ENCODE measurements at regions of chr12 and their contacts with region 1.

Region 1: GRCh38 chr12:121626087-121626852 is at the start of gene ORAI1:
- DNase-seq: peak; percentile 97
- H3K4me3 ChIP-seq: peak within 1 kb of the TSS; percentile 53 to 66
- H3K27ac ChIP-seq: peak within 1 kb of the TSS; percentile 86 to 87
- H3K4me1 ChIP-seq: no peaks in the 10 kb centered on the region
- H3K27me3 ChIP-seq: no peaks in the 10 kb centered on the region
- CTCF ChIP-seq: peak in 2 of 4 experiments; percentile 21 to 51
- POLR2A ChIP-seq: peak; percentile 66
- total RNA-seq, gene ORAI1: 5.5 to 71.1 TPM

Region 2: DNA sequence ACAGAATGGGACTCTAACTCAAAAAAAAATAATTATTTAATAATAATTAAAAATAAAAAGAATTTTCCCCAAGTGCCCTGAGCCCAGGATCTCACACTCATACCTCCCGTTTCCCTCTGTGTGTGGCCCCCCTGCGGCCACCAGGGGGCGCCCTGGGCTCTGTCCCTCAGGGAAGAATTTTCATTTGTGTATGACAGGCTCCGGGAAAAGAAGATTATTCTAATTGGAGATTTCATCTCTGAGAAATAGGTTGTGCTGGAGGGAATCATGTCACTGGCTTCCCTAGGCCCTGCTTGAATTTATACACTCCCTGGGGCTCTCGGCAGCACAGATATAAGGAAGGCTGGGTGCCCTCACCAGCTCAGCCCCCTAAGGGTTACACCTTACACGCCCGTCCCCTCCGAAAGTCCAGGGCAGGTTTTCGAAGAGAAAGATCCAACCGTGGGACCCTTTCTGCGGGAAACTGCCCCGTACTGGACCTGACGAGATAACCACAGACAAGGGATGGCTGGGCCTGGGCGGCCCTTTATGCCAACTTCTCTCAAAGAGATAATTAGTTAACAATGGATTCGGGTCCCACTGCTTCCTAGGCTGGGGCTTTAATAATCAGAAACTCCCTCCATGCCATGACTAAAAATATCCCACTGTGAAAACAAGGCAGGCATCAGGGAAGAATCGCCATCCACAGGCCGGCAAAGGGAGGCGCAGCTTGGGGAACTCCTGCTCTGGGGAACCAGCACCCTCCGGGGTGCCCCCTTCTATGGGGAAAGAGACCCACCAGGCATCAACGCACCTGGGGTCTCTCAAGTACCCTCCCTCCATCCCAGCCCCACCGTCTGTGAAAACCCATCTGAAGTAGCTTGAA is 126.1 kb before region 1 on chr12:
- intact Hi-C with region 1: loop called (anchors 5 kb)
- DNase-seq: peak; percentile 54
- H3K4me3 ChIP-seq: no peak overlapping the region
- H3K27ac ChIP-seq: peak overlapping the region in 1 of 2 donors; percentile 22
- H3K4me1 ChIP-seq: no peaks in the 10 kb centered on the region
- H3K27me3 ChIP-seq: no peaks in the 10 kb centered on the region
- CTCF ChIP-seq: peak; percentile 70 to 94 (median 84)
- POLR2A ChIP-seq: no peak

Region 3: GRCh38 chr12:121550974-121551634 is 75.2 kb before region 1 on chr12:
- intact Hi-C with region 1: loop called (anchors 5 kb)
- DNase-seq: no peak
- H3K4me3 ChIP-seq: no peak overlapping the region
- H3K27ac ChIP-seq: no peak overlapping the region
- H3K4me1 ChIP-seq: no peaks in the 10 kb centered on the region
- H3K27me3 ChIP-seq: no peaks in the 10 kb centered on the region
- CTCF ChIP-seq: no peak
- POLR2A ChIP-seq: no peak

Region 4: GRCh38 chr12:121579981-121580868 is 46.0 kb before region 1 on chr12:
- intact Hi-C with region 1: loop called (anchors 2 kb)
- DNase-seq: peak; percentile 72
- H3K4me3 ChIP-seq: peak overlapping the region; percentile 53 to 55
- H3K27ac ChIP-seq: peak overlapping the region; percentile 75 to 78
- H3K4me1 ChIP-seq: no peaks in the 10 kb centered on the region
- H3K27me3 ChIP-seq: no peaks in the 10 kb centered on the region
- CTCF ChIP-seq: no peak
- POLR2A ChIP-seq: no peak

Region 5: GRCh38 chr12:121678716-121679580 is 52.7 kb after region 1 on chr12:
- intact Hi-C with region 1: loop called (anchors 5 kb)
- DNase-seq: no peak
- H3K4me3 ChIP-seq: no peak overlapping the region
- H3K27ac ChIP-seq: no peak overlapping the region
- H3K4me1 ChIP-seq: no peaks in the 10 kb centered on the region
- H3K27me3 ChIP-seq: no peaks in the 10 kb centered on the region
- CTCF ChIP-seq: no peak
- POLR2A ChIP-seq: no peak

Region 6: GRCh38 chr12:122322501-122322900 is 696.2 kb after region 1 on chr12:
- intact Hi-C with region 1: no loop called
- DNase-seq: no peak
- H3K4me3 ChIP-seq: no peak overlapping the region
- H3K27ac ChIP-seq: no peak overlapping the region
- H3K4me1 ChIP-seq: no peaks in the 10 kb centered on the region
- H3K27me3 ChIP-seq: no peaks in the 10 kb centered on the region
- CTCF ChIP-seq: no peak
- POLR2A ChIP-seq: no peak